Caco-2 (cell line): ENCODE measurements at regions of chr10 and their contacts with region 1.

Region 1: DNA sequence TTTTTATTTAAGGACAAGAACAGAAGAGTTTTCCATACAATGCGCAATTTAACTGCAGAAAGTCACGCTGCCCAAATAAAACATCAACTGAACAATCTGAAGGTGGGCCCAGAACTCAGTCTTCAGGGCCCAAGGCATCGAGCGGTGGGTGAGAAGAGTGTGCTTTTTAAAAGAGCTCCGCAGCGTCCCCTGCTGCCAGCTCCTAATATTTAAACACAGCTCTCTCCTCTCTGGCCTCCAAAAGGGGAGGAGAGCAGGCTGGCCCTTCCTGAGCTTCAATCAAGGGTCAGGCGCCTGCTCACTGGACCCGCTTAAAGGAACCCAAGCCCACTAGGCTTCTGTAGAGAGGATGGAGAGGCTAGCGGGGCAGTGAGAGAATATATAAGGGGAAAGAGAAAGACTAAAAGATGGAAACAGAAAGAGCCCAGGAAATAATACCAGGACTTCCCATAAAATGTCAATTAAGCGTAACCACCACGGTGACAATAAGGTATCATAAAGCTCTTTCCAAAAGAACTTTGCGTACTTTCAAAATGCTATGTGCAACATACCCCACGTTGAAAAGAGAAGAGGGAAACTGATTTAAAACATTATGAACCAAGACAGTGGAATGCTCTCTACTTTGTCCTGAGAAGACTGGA is 2.8 kb downstream of the FAM53B start:
- DNase-seq: peak; percentile 71 to 76
- H3K4me3 ChIP-seq: no peak overlapping the region
- H3K4me3 Mint-ChIP-seq: peak overlapping the region; percentile 25
- H3K27ac Mint-ChIP-seq: no peak overlapping the region
- H3K4me1 ChIP-seq: peaks cover 46% of the 10 kb centered on the region
- H3K4me1 Mint-ChIP-seq: peaks cover 37% of the 10 kb centered on the region
- H3K27me3 ChIP-seq: no peaks in the 10 kb centered on the region
- H3K27me3 Mint-ChIP-seq: no peaks in the 10 kb centered on the region
- CTCF ChIP-seq: peak; percentile 75 to 85

Region 2: GRCh38 chr10:124530215-124530665 is 211.2 kb before region 1 on chr10:
- CTCF ChIA-PET with region 1: interaction called, 16 read pairs
- POLR2A ChIA-PET with region 1: no interaction called
- intact Hi-C with region 1: loop called (anchors 2 kb)
- DNase-seq: peak; percentile 84 to 88
- H3K4me3 ChIP-seq: no peak overlapping the region
- H3K4me3 Mint-ChIP-seq: no peak overlapping the region
- H3K27ac Mint-ChIP-seq: no peak overlapping the region
- H3K4me1 ChIP-seq: no peaks in the 10 kb centered on the region
- H3K4me1 Mint-ChIP-seq: no peaks in the 10 kb centered on the region
- H3K27me3 ChIP-seq: no peaks in the 10 kb centered on the region
- H3K27me3 Mint-ChIP-seq: no peaks in the 10 kb centered on the region
- CTCF ChIP-seq: peak; percentile 89 to 97

Region 3: GRCh38 chr10:124539935-124540641 is 201.3 kb before region 1 on chr10:
- CTCF ChIA-PET with region 1: interaction called, 6 read pairs
- POLR2A ChIA-PET with region 1: no interaction called
- intact Hi-C with region 1: loop called (anchors 1 kb)
- DNase-seq: peak; percentile 58 to 77
- H3K4me3 ChIP-seq: no peak overlapping the region
- H3K4me3 Mint-ChIP-seq: no peak overlapping the region
- H3K27ac Mint-ChIP-seq: no peak overlapping the region
- H3K4me1 ChIP-seq: no peaks in the 10 kb centered on the region
- H3K4me1 Mint-ChIP-seq: no peaks in the 10 kb centered on the region
- H3K27me3 ChIP-seq: no peaks in the 10 kb centered on the region
- H3K27me3 Mint-ChIP-seq: no peaks in the 10 kb centered on the region
- CTCF ChIP-seq: peak; percentile 73 to 92

Region 4: GRCh38 chr10:124632064-124632531 is 109.3 kb before region 1 on chr10:
- CTCF ChIA-PET with region 1: interaction called, 4 read pairs
- POLR2A ChIA-PET with region 1: no interaction called
- intact Hi-C with region 1: loop called (anchors 5 kb)
- DNase-seq: no peak
- H3K4me3 ChIP-seq: no peak overlapping the region
- H3K4me3 Mint-ChIP-seq: no peak overlapping the region
- H3K27ac Mint-ChIP-seq: no peak overlapping the region
- H3K4me1 ChIP-seq: 0 out of 2 replicates have a peak, but pooled peaks cover 3% of the 10 kb centered on the region
- H3K4me1 Mint-ChIP-seq: no peaks in the 10 kb centered on the region
- H3K27me3 ChIP-seq: no peaks in the 10 kb centered on the region
- H3K27me3 Mint-ChIP-seq: no peaks in the 10 kb centered on the region
- CTCF ChIP-seq: no peak

Region 5: DNA sequence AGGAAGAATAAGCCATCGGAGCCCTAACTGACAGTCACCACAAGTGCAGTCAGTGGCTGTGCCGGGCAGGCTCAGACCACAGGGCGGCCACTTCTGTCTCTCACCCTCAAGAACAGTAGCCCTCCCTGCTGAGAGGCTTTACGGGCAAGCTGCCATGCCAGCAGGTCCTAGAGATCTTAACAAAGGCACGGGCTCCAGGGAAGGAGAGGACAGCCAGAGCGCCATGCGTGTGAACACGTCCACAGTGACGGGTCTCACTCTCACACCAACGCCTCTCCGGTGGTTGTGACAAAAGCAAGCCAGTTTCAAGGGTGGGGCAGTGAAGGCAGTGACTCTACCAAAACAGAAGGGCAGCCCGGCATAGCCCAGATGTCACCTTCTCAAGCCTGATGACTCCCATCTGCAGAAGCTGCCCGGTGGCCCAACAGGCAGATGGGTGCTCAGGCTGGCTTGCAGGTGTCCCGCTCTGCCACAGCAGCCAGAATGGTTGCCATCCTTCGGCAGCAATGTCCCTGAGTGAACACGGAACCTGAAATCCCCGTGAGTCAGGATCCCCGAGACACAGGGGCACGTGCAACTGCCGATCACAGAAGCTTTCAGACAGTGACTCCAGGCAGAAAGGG is 99.2 kb before region 1 on chr10:
- CTCF ChIA-PET with region 1: no interaction called
- POLR2A ChIA-PET with region 1: no interaction called
- intact Hi-C with region 1: no loop called
- DNase-seq: no peak
- H3K4me3 ChIP-seq: no peak overlapping the region
- H3K4me3 Mint-ChIP-seq: no peak overlapping the region
- H3K27ac Mint-ChIP-seq: no peak overlapping the region
- H3K4me1 ChIP-seq: no peaks in the 10 kb centered on the region
- H3K4me1 Mint-ChIP-seq: no peaks in the 10 kb centered on the region
- H3K27me3 ChIP-seq: no peaks in the 10 kb centered on the region
- H3K27me3 Mint-ChIP-seq: no peaks in the 10 kb centered on the region
- CTCF ChIP-seq: no peak

Region 6: DNA sequence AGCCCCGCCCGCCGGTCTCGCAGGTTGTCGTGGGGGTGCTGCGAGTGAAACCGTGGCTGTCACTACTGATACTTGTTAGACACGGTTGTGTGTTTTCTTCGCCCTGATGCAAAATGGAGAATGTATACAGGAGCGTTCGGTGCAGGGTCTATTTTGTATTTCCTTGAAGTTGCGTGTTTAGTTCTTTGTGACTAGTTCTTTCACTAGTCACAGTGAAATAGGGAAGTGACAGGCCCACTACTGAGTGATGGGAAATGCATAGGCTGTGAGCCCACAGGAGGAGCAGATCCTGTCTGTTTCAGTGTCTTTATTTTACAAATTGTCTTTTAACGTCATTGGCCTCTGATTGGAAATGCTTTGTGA is 60.9 kb after region 1 on chr10:
- CTCF ChIA-PET with region 1: interaction called, 5 read pairs
- POLR2A ChIA-PET with region 1: no interaction called
- intact Hi-C with region 1: loop called (anchors 2 kb)
- DNase-seq: no peak
- H3K4me3 ChIP-seq: peak overlapping the region; percentile 65
- H3K4me3 Mint-ChIP-seq: peak overlapping the region; percentile 95
- H3K27ac Mint-ChIP-seq: peak overlapping the region; percentile 86
- H3K4me1 ChIP-seq: no peaks in the 10 kb centered on the region; the same call in 1 of the 2 replicates
- H3K4me1 Mint-ChIP-seq: peaks cover 12% of the 10 kb centered on the region
- H3K27me3 ChIP-seq: no peaks in the 10 kb centered on the region
- H3K27me3 Mint-ChIP-seq: no peaks in the 10 kb centered on the region
- CTCF ChIP-seq: no peak